ENCODE measurements at regions of chr3 and their contacts with region 1.

Region 1: DNA sequence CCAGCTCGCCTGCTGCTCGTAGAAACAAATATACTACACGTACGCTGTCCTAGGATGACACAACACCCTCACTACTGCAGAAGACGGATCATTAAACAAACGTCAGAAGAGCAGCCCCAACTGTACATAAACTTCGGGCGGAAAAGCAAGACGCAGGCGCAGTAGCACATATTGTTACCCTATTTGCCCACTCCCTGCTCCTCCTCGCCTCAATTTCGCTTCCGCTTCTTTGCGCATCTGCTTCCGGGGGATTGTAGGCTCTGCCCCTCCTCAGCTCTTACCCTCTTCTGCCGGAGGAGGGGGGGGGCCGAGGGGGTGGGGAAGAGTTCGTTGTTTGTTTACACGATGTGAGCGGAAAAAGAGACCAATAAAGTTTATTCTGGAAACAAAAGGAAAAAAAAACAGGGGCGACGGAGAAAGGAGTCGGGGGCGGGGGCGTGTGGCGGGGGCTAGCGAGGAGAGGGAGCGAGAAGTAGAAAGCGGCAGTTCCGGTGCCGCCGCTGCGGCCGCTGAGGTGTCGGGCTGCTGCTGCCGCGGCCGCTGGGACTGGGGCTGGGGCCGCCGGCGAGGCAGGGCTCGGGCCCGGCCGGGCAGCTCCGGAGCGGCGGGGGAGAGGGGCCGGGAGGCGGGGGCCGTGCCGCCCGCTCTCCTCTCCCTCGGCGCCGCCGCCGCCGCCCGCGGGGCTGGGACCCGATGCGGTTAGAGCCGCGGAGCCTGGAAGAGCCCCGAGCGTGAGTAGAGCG is at the start of gene PIK3CA:
- DNase-seq: peak; percentile 96
- H3K4me3 Mint-ChIP-seq: peak within 1 kb of the TSS; percentile 89
- H3K27ac Mint-ChIP-seq: peak within 1 kb of the TSS; percentile 88
- H3K4me1 Mint-ChIP-seq: peaks cover 38% of the 10 kb centered on the region
- H3K27me3 Mint-ChIP-seq: peaks cover 4% of the 10 kb centered on the region
- total RNA-seq, gene PIK3CA: 16.7 to 19.1 TPM

Region 2: DNA sequence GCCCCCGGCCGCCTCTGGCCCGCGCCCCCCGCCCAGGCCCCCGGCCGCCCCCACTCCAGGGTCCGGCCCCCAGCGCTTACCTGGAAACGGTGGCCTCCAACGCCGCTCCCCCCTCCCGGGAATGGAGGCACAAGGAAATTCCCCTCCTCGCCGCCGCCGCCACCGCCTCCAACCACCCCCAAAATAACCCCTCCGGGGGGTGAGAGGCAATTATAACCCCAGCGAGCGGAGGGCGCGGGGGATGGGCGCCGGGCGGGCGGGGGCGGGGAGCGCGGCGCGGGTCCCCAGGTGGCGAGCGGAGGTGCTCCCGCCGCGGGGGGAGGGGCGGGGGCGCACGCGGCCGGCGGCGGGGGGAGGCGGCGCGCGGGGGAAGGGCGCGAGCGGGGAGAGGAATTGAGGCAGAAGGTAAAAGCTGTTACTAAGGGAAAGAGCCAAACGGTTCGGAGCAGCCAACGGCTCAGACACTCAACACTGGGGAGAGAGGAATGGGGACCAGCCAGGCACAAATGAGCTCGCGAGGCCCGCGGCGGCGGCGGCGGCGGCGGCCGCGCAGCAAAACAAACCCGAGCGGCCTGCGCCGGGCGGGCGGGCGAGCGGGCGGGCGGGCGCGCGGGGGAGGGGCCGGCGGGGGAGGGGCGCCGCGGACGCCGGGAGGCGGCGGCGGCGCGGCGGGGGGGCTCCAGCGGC is 1950.9 kb before region 1 on chr3 and contains the start of gene TBL1XR1:
- CTCF ChIA-PET with region 1: no interaction called
- POLR2A ChIA-PET with region 1: no interaction called
- intact Hi-C with region 1: loop called (anchors 5 kb)
- DNase-seq: peak; percentile 89
- H3K4me3 Mint-ChIP-seq: peak within 1 kb of the TSS; percentile 90
- H3K27ac Mint-ChIP-seq: peak within 1 kb of the TSS; percentile 99
- H3K4me1 Mint-ChIP-seq: peaks cover 51% of the 10 kb centered on the region
- H3K27me3 Mint-ChIP-seq: no peaks in the 10 kb centered on the region
- total RNA-seq, gene TBL1XR1: 158 to 167 TPM

Region 3: DNA sequence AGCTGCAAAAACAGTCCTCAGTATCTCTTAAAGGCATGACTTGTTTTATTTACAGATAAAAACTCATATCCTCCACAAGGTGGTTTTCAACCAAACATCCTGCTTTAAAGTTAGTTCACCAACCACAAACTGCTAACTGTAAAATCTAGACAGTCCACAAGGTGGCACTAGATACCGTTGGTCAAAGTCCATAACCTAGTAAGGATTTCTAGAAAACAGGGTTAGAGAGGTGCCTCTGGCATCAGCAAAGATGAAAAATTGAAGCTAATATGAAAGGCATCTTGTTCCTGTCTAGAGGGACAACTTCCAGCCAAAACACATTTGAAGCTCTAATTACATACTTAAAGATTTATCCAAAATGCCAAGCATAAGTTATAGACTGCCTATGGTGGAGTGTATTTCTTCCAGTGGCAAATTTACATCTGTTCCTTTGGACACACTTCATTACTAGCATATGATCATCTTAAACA is 132.5 kb before region 1 on chr3:
- CTCF ChIA-PET with region 1: interaction called, 9 read pairs
- POLR2A ChIA-PET with region 1: interaction called, 3 read pairs
- intact Hi-C with region 1: loop called (anchors 1 kb)
- DNase-seq: peak; percentile 49
- H3K4me3 Mint-ChIP-seq: no peak overlapping the region
- H3K27ac Mint-ChIP-seq: peak overlapping the region; percentile 44
- H3K4me1 Mint-ChIP-seq: peaks cover 33% of the 10 kb centered on the region
- H3K27me3 Mint-ChIP-seq: no peaks in the 10 kb centered on the region

Region 4: GRCh38 chr3:179108086-179108485 is 40.0 kb before region 1 on chr3:
- CTCF ChIA-PET with region 1: interaction called, 4 read pairs
- POLR2A ChIA-PET with region 1: no interaction called
- intact Hi-C with region 1: loop called (anchors 1 kb)
- DNase-seq: no peak
- H3K4me3 Mint-ChIP-seq: no peak overlapping the region
- H3K27ac Mint-ChIP-seq: no peak overlapping the region
- H3K4me1 Mint-ChIP-seq: peaks cover 2% of the 10 kb centered on the region
- H3K27me3 Mint-ChIP-seq: peaks cover 11% of the 10 kb centered on the region

Region 5: GRCh38 chr3:179172546-179172945 is 24.5 kb after region 1 on chr3:
- CTCF ChIA-PET with region 1: no interaction called
- POLR2A ChIA-PET with region 1: no interaction called
- intact Hi-C with region 1: no loop called
- DNase-seq: no peak
- H3K4me3 Mint-ChIP-seq: no peak overlapping the region
- H3K27ac Mint-ChIP-seq: no peak overlapping the region
- H3K4me1 Mint-ChIP-seq: peaks cover 32% of the 10 kb centered on the region
- H3K27me3 Mint-ChIP-seq: no peaks in the 10 kb centered on the region

Region 6: GRCh38 chr3:179196098-179196497 is 48.1 kb after region 1 on chr3:
- CTCF ChIA-PET with region 1: interaction called, 3 read pairs
- POLR2A ChIA-PET with region 1: interaction called, 4 read pairs
- intact Hi-C with region 1: loop called (anchors 1 kb)
- DNase-seq: no peak
- H3K4me3 Mint-ChIP-seq: no peak overlapping the region
- H3K27ac Mint-ChIP-seq: peak overlapping the region; percentile 18
- H3K4me1 Mint-ChIP-seq: peaks cover 40% of the 10 kb centered on the region
- H3K27me3 Mint-ChIP-seq: no peaks in the 10 kb centered on the region

Region 7: DNA sequence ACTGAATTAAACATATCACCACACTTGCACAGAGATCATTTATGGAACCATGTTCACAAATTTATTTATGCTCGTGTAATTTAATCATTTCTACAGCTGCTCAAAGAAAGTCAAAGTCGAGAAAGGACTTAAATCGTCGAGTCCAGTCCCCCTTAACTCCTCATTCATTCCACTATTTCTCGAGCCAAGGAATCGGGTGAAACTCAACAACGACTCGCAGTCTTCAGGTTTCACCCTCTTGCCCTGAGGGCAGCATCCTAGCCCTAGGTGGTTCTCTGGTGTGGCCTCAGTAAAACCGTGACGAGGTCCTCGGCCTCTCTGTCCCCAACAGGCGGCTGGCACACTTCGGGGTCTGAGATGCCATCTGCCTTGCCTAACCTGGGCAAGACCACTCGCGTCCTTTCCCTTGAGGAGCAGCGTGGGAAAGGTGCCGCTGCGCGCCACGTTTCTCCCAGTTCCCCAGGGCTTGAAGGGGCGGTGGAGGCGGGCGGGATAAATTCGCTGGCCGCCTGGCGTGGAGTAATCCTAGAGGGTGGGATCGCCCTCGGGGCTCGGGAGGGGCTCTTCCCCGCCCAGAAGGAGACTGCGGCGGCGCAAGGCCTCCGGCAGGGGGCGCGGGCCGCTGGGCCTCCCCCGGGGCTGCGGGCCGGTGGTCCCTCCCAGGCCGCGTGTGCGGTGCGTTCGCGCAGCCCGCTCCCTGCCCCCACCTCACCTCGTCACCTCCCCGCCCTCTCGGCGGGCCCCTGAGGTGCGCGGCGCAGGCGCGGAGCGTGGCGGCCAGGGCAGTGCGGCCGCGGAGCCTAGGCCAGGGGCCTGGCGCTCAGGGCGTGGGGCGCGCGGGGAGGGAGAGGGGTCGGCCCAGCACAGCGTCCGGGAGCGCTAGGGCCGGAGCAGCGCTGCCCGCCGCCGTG is 174.5 kb after region 1 on chr3 and contains the start of gene ZNF639:
- CTCF ChIA-PET with region 1: interaction called, 4 read pairs
- POLR2A ChIA-PET with region 1: interaction called, 6 read pairs
- intact Hi-C with region 1: loop called (anchors 1 kb)
- DNase-seq: peak; percentile 86
- H3K4me3 Mint-ChIP-seq: peak within 1 kb of the TSS; percentile 90
- H3K27ac Mint-ChIP-seq: peak within 1 kb of the TSS; percentile 93
- H3K4me1 Mint-ChIP-seq: peaks cover 29% of the 10 kb centered on the region
- H3K27me3 Mint-ChIP-seq: no peaks in the 10 kb centered on the region
- total RNA-seq, gene ZNF639: 23.5 to 25.0 TPM

Region 8: GRCh38 chr3:179604321-179605078 is 456.5 kb after region 1 on chr3 and contains the starts of genes MRPL47 and NDUFB5:
- CTCF ChIA-PET with region 1: no interaction called
- POLR2A ChIA-PET with region 1: no interaction called
- intact Hi-C with region 1: loop called (anchors 1 kb)
- DNase-seq: peak; percentile 96
- H3K4me3 Mint-ChIP-seq: peak within 1 kb of the TSS; percentile 99
- H3K27ac Mint-ChIP-seq: peak within 1 kb of the TSS; percentile 98
- H3K4me1 Mint-ChIP-seq: peaks cover 40% of the 10 kb centered on the region
- H3K27me3 Mint-ChIP-seq: no peaks in the 10 kb centered on the region
- total RNA-seq, gene MRPL47: 51.4 to 54.0 TPM
- total RNA-seq, gene NDUFB5: 133 to 147 TPM

Measured in activated CD4-positive, alpha-beta memory T cell treated with anti-CD3 and anti-CD28 coated beads for 36 hours (primary cell).